ENCODE measurements at regions of chr2 and their contacts with region 1.

Region 1: GRCh38 chr2:105398699-105399432 is at the start of gene FHL2:
- DNase-seq: no peak
- H3K4me3 ChIP-seq: peak within 1 kb of the TSS; percentile 100
- H3K27me3 ChIP-seq: no peaks in the 10 kb centered on the region
- CTCF ChIP-seq: peak; percentile 37
- polyA plus RNA-seq, gene FHL2: 472 and 546 TPM in 2 replicates

Region 2: DNA sequence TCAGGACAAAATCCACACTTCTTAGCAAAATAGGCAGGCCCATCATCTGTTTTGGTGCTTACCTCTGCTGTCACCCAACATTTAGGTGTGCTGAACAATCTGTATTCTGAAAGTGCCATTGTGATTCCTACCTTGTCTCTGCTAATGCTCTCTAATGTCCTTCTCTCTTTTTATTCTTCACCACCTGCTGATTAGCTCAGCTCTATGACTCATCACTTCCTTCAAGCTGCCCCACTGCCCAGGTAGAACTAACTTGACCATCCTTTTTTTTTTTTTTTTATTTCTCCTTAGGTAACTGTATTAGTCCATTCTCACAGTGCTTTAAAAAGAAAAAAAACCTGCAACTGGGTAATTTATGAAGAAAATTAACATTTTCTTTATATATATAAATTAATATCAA is 1023.7 kb before region 1 on chr2:
- CTCF ChIA-PET with region 1: no interaction called
- POLR2A ChIA-PET with region 1: no interaction called
- DNase-seq: no peak
- H3K4me3 ChIP-seq: no peak overlapping the region
- H3K27me3 ChIP-seq: no peaks in the 10 kb centered on the region
- CTCF ChIP-seq: no peak

Region 3: GRCh38 chr2:105415007-105415406 is 16.1 kb after region 1 on chr2:
- CTCF ChIA-PET with region 1: interaction called, 5 read pairs
- POLR2A ChIA-PET with region 1: interaction called, 21 read pairs
- DNase-seq: no peak
- H3K4me3 ChIP-seq: no peak overlapping the region
- H3K27me3 ChIP-seq: peaks cover 2% of the 10 kb centered on the region
- CTCF ChIP-seq: no peak

Measured in BJ (cell line).